MCF 10A (cell line): ENCODE measurements at regions of chr7 and their contacts with region 1.

Region 1: DNA sequence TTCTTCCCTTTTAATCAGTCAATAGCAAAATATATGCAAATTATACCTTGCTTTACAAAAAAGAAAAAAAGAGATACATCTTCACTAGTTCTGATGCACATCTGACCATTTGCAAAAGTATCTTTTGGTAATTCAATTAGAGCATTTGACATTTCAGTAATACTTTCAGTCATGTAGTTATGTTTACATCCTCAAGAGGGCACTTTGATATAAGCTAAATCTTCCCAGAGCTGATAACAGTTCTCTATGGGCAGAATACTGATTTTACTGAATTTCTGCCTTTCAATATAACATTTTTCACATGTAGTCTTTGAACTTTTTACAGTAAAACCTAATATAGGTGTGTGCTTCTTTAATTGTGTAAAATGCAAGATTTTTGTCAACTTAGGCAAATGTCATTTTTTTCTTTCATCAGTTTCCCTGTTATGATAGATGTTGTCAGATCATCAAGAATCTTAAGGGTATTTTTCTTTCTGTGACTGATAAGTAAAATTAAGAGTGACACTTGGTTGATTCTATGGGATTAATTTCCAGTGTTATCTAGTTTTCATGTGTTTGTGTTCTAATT is 703.5 kb upstream of the SEMA3D start:
- DNase-seq: peak; percentile 30
- H3K4me3 Mint-ChIP-seq: no peak overlapping the region
- H3K27ac Mint-ChIP-seq: no peak overlapping the region
- H3K4me1 Mint-ChIP-seq: no peaks in the 10 kb centered on the region
- H3K27me3 Mint-ChIP-seq: peaks cover 44% of the 10 kb centered on the region
- CTCF ChIP-seq: peak; percentile 53

Region 2: GRCh38 chr7:85840554-85840953 is 49.8 kb before region 1 on chr7:
- CTCF ChIA-PET with region 1: no interaction called
- POLR2A ChIA-PET with region 1: no interaction called
- intact Hi-C with region 1: no loop called
- DNase-seq: no peak
- H3K4me3 Mint-ChIP-seq: no peak overlapping the region
- H3K27ac Mint-ChIP-seq: no peak overlapping the region
- H3K4me1 Mint-ChIP-seq: no peaks in the 10 kb centered on the region
- H3K27me3 Mint-ChIP-seq: peaks cover 71% of the 10 kb centered on the region
- CTCF ChIP-seq: no peak

Region 3: GRCh38 chr7:86814661-86815379 is 924.5 kb after region 1 on chr7:
- CTCF ChIA-PET with region 1: interaction called, 5 read pairs
- POLR2A ChIA-PET with region 1: no interaction called
- intact Hi-C with region 1: loop called (anchors 2 kb)
- DNase-seq: peak; percentile 23
- H3K4me3 Mint-ChIP-seq: no peak overlapping the region
- H3K27ac Mint-ChIP-seq: no peak overlapping the region
- H3K4me1 Mint-ChIP-seq: no peaks in the 10 kb centered on the region
- H3K27me3 Mint-ChIP-seq: peaks cover 50% of the 10 kb centered on the region
- CTCF ChIP-seq: peak; percentile 24

Region 4: DNA sequence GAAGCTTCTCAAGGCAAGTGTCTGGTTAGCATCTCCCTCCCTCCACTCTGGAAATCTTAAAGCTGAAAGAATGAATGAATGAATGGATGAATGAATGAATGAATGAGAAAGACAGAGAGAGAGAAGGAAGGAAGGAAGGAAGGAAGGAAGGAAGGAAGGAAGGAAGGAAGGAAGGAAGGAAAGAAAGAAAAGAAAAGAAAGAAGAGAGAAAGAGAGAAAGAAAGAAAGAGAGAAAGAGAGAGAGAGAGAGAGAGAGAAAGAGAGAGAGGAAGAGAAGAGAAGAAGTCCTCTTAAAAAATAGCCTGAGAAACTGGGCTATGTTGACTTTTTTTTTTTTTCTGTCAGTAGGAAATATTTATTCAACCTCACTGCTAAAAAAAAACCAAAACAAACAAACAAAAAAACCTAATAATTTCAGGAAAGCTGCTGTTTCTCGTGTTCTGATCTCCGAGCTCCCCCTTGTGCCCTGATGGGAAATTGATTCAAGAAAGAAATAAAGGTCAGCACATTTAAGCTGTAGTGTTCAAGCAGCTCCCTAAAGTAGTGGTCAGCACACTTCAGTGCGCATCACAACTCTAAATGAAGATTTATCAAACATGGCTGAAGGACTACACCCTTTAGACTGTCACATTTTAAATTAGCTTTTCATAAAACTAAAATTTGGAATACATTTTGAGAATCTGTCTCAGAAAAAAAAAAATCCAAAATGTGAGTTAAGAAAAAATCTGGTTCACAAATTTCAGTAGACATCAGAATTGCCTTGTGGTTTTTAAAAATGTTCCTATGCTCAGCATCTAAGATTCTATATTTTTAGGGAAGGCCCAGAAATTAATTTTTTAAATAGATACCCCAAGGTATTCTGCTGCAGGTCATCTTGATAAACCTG is 1014.9 kb after region 1 on chr7:
- CTCF ChIA-PET with region 1: interaction called, 10 read pairs
- POLR2A ChIA-PET with region 1: no interaction called
- intact Hi-C with region 1: loop called (anchors 2 kb)
- DNase-seq: peak; percentile 35
- H3K4me3 Mint-ChIP-seq: no peak overlapping the region
- H3K27ac Mint-ChIP-seq: peak overlapping the region; percentile 49
- H3K4me1 Mint-ChIP-seq: no peaks in the 10 kb centered on the region
- H3K27me3 Mint-ChIP-seq: peaks cover 22% of the 10 kb centered on the region
- CTCF ChIP-seq: peak; percentile 60